HEK293 (cell line): ENCODE measurements at regions of chr15 and their contacts with region 1.

Region 1: DNA sequence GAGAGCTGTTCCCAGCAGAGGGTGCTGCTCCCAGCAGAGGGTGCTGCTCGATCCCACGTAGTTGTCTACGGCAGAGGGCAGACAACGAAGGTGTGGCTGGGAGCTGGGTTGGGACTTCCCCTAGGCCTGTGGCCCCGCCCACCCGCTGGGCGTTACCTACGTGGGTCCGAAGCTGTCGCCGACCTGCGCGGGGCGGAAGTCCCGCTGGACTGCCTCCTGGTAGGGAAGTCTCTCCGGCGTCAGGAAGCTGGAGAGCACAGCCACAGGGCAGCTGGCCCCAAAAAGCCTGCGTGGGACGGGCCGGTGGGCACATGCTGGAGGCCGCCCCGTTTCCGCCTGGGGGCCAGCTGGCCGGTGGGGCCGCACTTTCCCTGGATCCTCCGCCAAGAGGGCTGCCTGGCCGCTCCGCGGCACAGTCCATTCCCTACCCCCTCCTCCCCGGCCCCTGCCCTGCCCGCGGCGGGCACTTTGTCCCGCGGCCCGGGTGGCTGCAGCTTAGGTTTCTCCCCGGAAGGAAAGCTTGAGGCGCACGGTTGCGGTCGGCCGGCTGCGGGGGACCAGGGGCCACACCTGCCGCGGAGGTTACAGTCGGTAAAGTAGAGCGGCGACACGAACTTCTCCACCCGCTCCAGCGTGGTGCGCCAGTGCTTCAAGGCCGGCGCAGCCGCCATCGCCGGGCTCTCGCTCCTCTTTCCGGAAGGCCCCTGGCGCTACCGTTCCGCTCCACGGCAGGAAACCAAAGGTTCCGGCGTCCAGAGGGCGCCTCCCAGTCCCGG is at the start of gene MAN2C1:
- H3K4me3 ChIP-seq: peak within 1 kb of the TSS; percentile 88
- H3K27ac ChIP-seq: peak within 1 kb of the TSS; percentile 81
- H3K4me1 ChIP-seq: peaks cover 8% of the 10 kb centered on the region
- CTCF ChIP-seq: peak; percentile 100

Region 2: DNA sequence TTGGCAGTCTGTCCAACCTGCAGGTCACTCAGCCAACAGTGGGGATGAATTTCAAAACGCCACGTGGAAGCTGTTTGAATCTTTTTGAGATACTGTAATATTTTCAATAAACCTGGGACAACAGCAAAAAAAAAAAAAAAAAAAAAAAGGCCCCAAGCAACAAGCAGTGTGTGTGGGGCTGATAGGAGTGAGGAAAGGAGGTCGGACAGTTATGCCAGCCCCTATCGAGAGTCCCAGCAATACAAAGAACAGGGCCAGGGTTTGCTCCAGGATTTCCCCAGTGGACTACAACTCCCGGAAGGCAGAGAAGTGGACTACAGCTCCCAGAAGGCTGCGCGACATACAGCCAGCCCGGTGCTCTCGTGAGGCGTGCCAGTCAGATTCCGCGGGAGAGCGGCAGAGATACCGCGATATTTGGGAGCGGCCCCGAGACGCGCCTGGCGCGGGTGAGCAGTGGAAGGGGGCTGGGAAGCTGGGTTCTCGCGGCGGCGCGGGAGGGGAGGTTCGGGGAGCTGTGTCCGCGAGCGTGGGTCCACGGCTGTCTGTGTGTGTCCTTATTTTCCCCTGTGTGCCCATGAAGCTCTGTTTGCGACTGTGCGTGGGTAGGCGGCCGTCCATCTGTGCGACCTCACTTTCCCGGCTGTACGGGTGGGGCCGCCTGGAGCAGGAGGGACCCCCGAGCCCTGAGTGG is 344.8 kb before region 1 on chr15 and contains the start of gene PPCDC:
- CTCF ChIA-PET with region 1: interaction called, 6 read pairs
- POLR2A ChIA-PET with region 1: interaction called, 14 read pairs
- H3K4me3 ChIP-seq: peak within 1 kb of the TSS; percentile 66
- H3K27ac ChIP-seq: peak within 1 kb of the TSS; percentile 93
- H3K4me1 ChIP-seq: 0 out of 2 replicates have a peak, but pooled peaks cover 2% of the 10 kb centered on the region
- CTCF ChIP-seq: peak; percentile 32; the same call in 1 of the 2 replicates

Region 3: DNA sequence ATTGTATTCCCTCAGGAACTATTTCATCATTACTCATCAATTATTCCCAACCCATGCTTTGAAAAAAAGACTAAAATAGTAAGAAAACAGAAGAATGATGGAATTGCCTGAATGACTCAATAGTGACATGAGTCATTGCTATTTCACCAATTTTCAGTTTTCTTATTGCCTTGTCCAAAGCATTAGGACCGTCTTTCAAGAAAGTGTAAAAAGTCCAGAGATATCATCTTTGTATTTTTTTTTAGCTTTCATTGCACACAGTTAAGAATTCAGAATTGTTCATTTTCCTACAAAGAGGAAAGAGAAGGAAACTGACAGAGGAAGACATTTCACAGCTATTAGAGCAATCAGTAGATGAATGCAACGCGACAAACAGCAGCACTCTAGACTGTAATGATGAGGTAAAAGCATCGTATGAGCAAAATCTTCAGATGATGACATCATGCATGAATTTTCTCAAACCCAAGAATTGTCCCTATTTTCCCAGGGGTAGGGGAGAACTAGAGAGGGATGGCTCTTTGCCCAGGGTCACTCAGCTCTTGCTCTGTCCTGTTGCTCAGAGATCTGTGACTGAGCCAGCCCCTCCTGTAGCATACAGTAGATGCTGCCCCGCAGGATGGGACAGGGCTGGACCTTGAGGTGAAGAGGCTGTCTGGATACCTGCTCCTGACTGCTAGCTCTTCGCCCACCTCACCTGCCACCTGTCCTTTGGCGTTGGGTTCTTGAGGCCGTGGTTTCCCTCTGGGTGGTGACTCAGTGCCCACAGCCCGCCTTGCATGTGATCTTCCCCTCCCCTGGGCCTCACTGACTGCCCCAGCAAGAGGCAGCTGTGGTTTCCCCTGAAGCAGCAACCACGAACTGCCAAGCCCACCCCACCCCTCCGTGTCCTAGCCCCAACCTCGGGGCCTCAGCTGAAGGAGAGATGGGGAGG is 259.9 kb before region 1 on chr15:
- CTCF ChIA-PET with region 1: no interaction called
- POLR2A ChIA-PET with region 1: no interaction called
- H3K4me3 ChIP-seq: no peak overlapping the region
- H3K27ac ChIP-seq: no peak overlapping the region
- H3K4me1 ChIP-seq: no peaks in the 10 kb centered on the region
- CTCF ChIP-seq: no peak

Region 4: DNA sequence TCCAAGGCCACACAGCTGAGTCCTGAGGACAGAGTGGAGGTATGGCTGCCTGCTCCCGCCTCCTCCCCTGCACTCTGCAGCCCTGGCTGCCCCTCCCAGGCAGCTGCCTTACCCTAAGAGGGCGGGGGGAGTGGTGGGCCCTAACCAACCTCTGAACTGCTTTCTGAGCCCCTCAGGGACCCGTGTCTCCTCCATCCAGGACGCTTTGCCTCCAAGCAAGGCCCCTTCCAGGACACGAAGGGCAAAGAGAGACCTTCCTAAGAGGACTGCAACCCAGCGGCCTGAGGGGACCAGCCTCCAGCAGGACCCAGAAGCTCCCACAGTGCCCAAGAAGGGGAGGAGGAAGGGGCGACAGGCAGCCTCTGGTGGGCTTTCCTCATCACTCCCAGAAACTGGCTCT is 13.6 kb before region 1 on chr15:
- CTCF ChIA-PET with region 1: interaction called, 40 read pairs
- POLR2A ChIA-PET with region 1: interaction called, 55 read pairs
- H3K4me3 ChIP-seq: no peak overlapping the region
- H3K27ac ChIP-seq: no peak overlapping the region
- H3K4me1 ChIP-seq: no peaks in the 10 kb centered on the region
- CTCF ChIP-seq: no peak

Region 5: GRCh38 chr15:75446151-75446550 is 78.0 kb after region 1 on chr15:
- CTCF ChIA-PET with region 1: interaction called, 63 read pairs
- POLR2A ChIA-PET with region 1: interaction called, 242 read pairs
- H3K4me3 ChIP-seq: no peak overlapping the region
- H3K27ac ChIP-seq: peak overlapping the region; percentile 13; the same call in 1 of the 2 replicates
- H3K4me1 ChIP-seq: peaks cover 23% of the 10 kb centered on the region
- CTCF ChIP-seq: no peak

Region 6: DNA sequence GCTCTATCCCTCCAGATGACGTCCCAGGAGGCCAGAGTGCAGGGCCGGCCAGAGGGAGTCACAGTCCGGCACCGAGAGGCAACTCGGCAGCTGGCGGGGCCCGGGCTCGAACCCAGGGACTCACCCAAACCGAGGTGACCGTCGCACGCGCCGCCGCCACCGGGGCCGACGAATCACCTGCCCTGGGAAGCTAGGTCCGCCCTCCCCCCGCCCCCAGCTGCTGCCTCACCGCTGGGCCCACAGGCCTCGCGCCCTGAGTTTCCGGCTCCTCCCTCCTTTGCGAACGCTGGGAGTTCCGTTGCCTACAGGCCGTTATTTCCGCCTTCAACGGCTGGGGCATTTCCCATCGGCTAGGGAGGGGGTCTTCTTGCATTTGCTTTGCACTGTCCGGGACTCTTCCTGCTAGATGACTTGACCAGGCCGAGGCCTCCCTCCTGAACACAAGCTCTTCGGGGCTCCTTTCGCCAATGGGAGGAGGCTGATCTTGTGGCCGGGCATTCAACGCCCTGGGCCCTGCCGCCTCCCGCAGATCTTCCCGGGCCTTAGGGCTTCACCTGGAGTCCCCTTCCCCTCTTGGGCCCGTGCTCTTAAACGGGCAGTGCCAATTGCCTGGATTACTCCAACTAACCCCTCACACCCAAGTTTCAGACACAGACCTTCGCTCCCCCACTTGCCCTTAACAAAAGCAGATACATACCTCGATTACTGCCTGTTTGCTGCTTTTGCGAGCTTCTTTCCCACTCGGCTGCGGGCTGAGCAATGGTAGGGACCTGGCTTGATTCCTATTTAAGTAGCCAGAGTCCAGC is 257.6 kb after region 1 on chr15 and contains the start of gene SNUPN:
- CTCF ChIA-PET with region 1: interaction called, 16 read pairs
- POLR2A ChIA-PET with region 1: interaction called, 24 read pairs
- H3K4me3 ChIP-seq: peak within 1 kb of the TSS; percentile 96
- H3K27ac ChIP-seq: peak within 1 kb of the TSS; percentile 96
- H3K4me1 ChIP-seq: no peaks in the 10 kb centered on the region; the same call in 1 of the 2 replicates
- CTCF ChIP-seq: peak; percentile 6; the same call in 1 of the 2 replicates

Region 7: GRCh38 chr15:75672646-75673425 is 304.7 kb after region 1 on chr15:
- CTCF ChIA-PET with region 1: interaction called, 19 read pairs
- POLR2A ChIA-PET with region 1: interaction called, 9 read pairs
- H3K4me3 ChIP-seq: no peak overlapping the region
- H3K27ac ChIP-seq: peak overlapping the region; percentile 36; the same call in 1 of the 2 replicates
- H3K4me1 ChIP-seq: peaks cover 10% of the 10 kb centered on the region
- CTCF ChIP-seq: 0 out of 2 replicates have a peak, but pooled peaks have one; percentile 38